Left ventricle myocardium superior (tissue), 1 donor: ENCODE measurements at regions of chr4 and their contacts with region 1.

Region 1: DNA sequence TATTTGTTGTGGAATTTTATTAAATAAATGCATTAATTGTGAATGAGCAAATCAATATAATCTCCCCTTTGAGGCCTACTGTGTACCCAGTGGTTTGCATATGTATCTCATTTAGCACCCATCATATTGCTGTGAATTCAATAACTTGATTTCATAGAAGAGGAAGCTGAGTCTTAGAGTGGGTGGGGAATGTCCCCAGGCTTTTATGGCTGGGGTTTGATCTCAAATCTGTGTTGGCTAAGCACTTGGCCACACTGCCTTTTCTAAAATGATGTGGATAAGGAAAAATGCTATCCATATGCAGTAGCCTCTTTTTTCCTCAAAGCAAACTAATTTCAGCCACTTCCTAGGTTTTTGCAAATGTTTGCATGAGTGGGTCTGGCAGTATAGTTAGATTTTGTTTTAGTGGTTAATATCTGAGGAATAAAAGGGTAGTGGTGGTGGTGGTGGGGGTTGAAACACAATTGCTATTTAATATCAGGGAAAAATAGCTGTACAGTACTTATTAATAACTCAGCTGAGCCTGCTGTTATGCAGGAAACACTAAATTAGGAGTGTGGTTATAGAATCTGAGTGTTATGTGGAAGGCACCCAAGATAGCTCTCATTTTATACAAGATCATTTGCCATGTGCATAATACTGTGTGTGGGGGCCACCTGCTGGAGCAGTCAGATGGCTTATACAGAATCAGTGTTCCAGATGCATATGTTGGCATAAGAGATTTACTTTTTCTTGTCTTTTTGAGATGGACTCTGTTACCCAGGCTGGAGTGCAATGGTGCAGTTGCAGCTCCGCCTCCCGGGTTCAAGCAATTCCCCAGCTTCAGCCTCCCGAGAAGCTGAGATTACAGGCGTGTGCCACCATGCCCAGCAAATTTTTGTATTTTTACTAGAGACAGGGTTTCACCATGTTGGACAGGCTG is 108.0 kb downstream of the TMEM131L start:
- DNase-seq: peak; percentile 79
- ATAC-seq: peak; percentile 87

Region 2: DNA sequence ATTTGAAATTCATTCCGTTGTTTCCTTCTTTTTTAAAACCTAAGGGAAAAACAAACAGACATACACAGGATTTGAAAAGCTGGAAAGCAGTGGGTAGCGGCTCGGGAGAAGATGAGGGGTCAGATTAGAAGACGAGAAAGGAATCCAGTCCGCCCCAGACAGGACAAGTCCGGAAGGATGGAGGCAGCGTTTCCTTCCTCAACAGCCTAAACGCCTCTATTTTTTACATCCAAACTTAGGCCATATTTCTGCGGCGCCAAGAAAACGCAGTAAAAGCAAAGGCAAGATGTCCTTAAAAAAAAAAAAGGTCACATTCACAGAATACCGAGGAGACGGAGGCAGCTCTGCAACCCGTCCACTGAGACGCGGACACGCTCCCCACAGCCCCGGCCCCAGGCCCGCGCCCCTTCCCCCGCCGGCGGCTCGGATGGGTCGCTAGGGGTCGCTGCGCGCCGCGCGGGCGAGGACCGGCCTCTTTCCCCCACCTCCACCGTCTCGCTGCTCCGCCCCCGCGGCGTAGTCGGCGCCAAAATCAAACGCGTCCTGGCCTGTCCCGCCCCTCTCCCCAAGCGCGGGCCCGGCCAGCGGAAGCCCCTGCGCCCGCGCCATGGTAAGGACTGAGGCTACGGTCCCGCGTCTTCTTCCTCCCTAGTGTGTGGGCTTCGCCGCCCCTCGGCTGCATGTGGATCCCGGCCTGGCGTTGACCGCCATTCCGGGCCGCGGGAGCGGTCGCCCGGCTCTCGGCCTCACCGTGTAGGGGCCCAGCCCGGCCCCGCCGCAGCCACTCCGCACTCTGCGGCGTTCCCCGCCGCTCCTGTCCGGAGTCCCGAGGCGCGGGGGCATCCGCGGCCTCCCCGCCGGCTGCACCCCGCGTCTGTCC is 229.8 kb before region 1 on chr4 and contains the start of gene MND1:
- intact Hi-C with region 1: loop called (anchors 2 kb)
- DNase-seq: peak; percentile 90
- ATAC-seq: peak; percentile 97
- total RNA-seq, gene MND1: not detected

Region 3: DNA sequence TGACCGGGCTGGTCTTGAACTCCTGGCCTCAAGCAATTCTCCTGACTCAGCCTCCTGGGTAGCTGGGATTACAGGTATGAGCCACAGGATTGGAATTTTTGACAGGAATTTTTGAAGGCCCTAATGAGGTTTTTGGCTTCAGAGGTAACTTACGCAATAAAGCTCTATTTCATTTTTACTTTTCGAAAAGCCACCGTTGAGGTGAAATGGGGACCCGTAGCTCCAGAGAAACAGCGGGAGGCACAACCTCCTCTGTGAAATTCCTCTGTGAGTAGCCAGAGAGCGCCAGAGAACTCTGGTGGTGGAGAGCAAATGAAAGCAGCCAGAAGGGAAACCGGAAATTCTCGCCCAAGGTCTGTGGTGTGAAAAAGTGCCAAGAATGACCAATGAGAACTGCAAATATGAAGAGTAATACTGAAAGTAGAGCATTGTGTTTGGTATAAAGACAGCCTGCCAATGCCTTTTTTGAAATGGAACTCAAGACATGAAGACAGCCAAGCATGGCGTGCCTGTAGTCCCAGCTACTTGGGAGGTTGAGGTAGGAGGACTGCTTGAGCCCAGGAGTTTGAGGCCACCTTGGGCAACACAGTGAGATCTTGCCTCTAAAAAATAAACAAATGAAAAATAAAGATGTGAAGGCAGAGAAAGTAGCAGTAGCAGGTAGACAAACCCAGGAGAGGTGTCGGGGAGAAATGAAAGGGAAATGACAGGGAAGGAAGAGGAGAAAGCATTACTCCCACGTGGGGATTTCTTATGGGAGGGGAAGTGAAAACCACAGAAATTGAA is 141.0 kb before region 1 on chr4:
- intact Hi-C with region 1: loop called (anchors 2 kb)
- DNase-seq: peak; percentile 46
- ATAC-seq: peak; percentile 86

Region 4: DNA sequence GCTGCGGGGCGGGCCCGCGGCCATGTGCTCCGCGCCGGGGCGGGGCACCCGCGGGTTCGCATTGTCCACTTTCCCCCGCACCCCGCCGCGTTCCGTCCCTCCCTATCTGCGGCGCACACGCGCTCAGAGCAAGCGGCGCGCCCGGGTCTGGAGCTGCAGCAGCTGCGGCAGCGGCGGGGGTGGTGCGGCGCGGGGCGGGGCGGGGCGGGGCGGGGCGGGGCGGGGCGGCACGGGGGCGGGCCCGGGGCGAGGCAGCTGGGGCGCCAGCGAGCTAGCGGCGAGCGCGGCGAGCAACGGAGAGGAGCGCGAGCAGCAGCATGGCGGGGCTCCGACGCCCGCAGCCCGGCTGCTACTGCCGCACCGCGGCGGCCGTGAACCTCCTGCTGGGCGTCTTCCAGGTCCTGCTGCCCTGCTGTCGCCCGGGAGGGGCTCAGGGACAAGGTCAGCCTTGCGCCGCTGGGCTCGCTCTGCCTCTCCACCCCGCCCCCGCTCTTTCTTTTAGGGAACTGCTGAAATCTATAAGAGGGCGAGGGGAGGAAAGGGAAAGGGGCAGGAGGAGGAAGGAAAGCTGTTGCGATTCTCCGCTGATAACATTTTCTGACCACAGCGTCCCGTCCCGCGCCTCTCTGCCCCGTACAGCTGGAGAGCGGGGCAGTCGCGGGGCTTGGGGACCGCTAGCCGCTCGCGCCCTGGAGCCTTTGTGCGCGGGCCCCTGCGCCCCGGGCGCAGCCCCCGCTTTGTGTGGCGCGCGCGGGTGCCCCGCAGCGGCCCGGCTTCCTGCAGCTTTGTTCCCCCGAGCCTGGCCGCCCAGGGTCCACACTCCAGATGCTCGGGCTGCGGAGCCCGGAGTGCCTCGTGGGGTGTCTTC is 107.8 kb before region 1 on chr4 and contains the start of gene TMEM131L:
- intact Hi-C with region 1: loop called (anchors 10 kb)
- DNase-seq: peak; percentile 86
- ATAC-seq: peak; percentile 90
- total RNA-seq, gene TMEM131L: 16.8 TPM

Region 5: DNA sequence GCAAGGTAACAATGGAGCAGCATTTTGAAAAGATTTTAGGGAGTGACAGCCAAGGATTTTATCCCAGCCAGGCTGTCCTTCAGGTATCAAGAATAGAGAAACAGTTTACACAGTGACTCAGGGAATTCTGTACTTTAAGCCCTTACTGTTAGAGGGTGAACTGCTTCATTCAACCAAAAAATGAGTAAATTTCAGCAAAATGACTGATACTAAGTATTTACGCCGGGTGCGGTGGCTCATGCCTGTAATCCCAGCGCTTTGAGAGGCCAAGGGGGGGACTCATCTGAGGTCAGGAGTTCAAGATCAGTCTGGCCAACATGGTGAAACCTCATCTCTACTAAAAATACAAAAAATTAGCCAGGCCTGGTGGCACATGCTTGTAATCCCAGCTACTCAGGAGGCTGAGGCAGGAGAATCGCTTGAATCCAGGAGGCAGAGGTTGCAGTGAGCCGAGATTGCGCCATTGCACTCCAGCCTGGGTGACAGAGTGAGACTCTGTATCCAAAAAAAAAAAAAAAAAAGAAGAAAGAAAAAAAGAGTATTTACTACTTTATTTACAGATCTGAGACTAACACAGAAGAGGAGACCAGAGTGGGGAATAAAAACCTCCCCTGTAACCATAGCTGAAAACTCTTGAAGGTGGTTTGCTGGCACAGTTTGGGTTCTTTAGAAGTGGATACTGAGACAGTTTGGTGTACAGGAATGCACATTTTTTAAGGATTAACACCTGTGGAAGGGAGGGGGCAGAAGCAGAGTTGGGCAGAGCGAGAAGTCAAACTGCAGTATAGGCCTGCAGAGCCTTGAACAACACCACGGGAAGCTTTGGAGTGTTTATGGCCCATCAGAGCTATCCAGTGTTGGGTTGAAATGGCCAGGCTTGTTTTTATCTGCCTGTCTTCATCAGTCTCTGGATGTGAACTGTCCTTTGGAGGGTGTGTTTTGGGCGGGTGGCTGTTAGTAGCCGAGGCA is 67.5 kb before region 1 on chr4:
- intact Hi-C with region 1: no loop called
- DNase-seq: no peak
- ATAC-seq: no peak

Region 6: DNA sequence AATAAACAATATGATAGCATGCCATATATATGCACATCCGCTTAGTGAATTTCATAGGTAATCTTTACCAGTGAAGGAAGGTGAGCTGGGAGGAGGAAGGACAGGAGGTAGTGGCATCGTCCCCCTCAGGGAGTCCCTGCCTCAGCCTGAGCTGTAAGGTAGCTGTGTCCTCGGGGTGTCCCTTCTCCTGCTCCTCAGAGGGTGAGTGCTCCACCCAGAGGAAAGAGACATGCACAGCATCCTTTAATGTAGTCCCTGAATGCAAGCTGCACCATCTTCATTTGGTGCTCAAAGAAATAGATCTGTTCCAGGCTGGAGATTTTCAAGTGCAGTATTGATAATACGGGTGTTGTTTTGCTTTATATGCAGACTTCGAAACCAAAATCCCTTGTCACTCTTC is 545.2 kb after region 1 on chr4:
- intact Hi-C with region 1: no loop called
- DNase-seq: no peak
- ATAC-seq: no peak